ENCODE measurements at regions of chr6 and their contacts with region 1.

Region 1: GRCh38 chr6:31597006-31597405 is 4.2 kb upstream of the NCR3 start:
- DNase-seq: peak in 1 of 2 experiments; percentile 52
- H3K4me3 ChIP-seq: no peak overlapping the region
- H3K4me3 Mint-ChIP-seq: no peak overlapping the region
- H3K27ac Mint-ChIP-seq: no peak overlapping the region
- H3K4me1 ChIP-seq: no peaks in the 10 kb centered on the region
- H3K4me1 Mint-ChIP-seq: peaks cover 5% of the 10 kb centered on the region
- H3K27me3 ChIP-seq: no peaks in the 10 kb centered on the region
- H3K27me3 Mint-ChIP-seq: no peaks in the 10 kb centered on the region
- CTCF ChIP-seq: peak; percentile 34 to 38

Region 2: DNA sequence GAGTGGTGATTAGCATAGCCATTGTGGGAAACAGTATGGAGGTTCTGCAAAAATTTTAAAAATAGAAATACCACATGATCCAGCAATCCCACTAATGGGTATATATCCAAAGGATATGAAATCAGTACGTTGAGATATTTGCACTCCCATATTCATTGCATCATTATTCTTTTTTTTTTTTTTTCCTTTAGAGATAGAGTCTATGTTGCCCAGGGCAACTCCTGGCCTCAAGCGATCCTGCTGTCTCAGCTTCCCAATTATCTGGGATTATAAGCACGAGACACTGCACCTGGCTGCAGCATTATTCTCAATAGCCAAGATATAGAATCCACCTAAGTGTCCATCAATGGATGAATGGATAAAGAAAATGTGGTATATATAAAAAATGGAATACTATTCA is 75.2 kb before region 1 on chr6:
- CTCF ChIA-PET with region 1: no interaction called
- POLR2A ChIA-PET with region 1: no interaction called
- intact Hi-C with region 1: no loop called
- DNase-seq: no peak
- H3K4me3 ChIP-seq: no peak overlapping the region
- H3K4me3 Mint-ChIP-seq: no peak overlapping the region
- H3K27ac Mint-ChIP-seq: no peak overlapping the region
- H3K4me1 ChIP-seq: no peaks in the 10 kb centered on the region
- H3K4me1 Mint-ChIP-seq: no peaks in the 10 kb centered on the region
- H3K27me3 ChIP-seq: no peaks in the 10 kb centered on the region
- H3K27me3 Mint-ChIP-seq: peaks cover 4% of the 10 kb centered on the region
- CTCF ChIP-seq: no peak

Region 3: DNA sequence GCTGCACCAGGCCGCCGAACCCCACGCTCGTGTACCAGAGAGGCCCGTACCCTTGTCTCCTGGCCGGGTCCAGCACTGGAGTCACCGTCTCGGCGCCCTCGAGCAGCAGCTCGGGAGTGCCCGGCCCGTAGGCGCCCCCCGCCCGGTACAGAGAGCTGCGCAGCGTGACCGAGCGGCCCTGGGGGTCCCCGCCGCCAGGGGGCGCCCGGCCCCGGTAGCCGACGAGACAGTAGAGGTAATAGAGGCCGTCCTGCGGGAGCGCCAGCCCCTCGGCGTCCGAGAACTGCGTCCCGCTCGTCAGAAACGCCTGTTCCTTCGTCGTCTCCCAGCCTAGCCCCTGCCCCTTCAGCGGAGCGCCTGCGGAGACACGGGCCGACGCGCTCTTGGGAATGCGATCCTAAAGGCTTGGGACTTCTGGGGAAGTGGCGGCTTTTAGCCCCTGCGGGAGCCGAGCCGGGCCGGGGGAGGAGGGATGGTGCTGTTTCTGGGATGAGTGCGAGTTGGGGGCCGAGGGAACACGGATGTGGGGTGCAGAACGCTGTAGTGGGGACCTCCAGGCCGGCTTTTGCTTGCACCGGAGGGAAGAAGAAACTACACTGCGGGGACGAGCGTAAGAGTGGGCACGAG is 16.1 kb before region 1 on chr6:
- CTCF ChIA-PET with region 1: interaction called, 80 read pairs
- POLR2A ChIA-PET with region 1: no interaction called
- intact Hi-C with region 1: loop called (anchors 1 kb)
- DNase-seq: peak; percentile 82 to 92
- H3K4me3 ChIP-seq: peak overlapping the region; percentile 80
- H3K4me3 Mint-ChIP-seq: peak overlapping the region; percentile 97
- H3K27ac Mint-ChIP-seq: peak overlapping the region; percentile 83
- H3K4me1 ChIP-seq: peaks cover 3% of the 10 kb centered on the region; the same call in 1 of the 2 replicates
- H3K4me1 Mint-ChIP-seq: peaks cover 18% of the 10 kb centered on the region
- H3K27me3 ChIP-seq: no peaks in the 10 kb centered on the region
- H3K27me3 Mint-ChIP-seq: no peaks in the 10 kb centered on the region
- CTCF ChIP-seq: peak; percentile 90 to 93

Region 4: GRCh38 chr6:31882344-31882743 is 285.3 kb after region 1 on chr6:
- CTCF ChIA-PET with region 1: no interaction called
- POLR2A ChIA-PET with region 1: no interaction called
- intact Hi-C with region 1: no loop called
- DNase-seq: no peak
- H3K4me3 ChIP-seq: no peak overlapping the region
- H3K4me3 Mint-ChIP-seq: no peak overlapping the region
- H3K27ac Mint-ChIP-seq: no peak overlapping the region
- H3K4me1 ChIP-seq: peaks cover 11% of the 10 kb centered on the region; the same call in 1 of the 2 replicates
- H3K4me1 Mint-ChIP-seq: peaks cover 8% of the 10 kb centered on the region
- H3K27me3 ChIP-seq: no peaks in the 10 kb centered on the region
- H3K27me3 Mint-ChIP-seq: no peaks in the 10 kb centered on the region
- CTCF ChIP-seq: no peak